ENCODE measurements at regions of chr1 and their contacts with region 1.

Region 1: DNA sequence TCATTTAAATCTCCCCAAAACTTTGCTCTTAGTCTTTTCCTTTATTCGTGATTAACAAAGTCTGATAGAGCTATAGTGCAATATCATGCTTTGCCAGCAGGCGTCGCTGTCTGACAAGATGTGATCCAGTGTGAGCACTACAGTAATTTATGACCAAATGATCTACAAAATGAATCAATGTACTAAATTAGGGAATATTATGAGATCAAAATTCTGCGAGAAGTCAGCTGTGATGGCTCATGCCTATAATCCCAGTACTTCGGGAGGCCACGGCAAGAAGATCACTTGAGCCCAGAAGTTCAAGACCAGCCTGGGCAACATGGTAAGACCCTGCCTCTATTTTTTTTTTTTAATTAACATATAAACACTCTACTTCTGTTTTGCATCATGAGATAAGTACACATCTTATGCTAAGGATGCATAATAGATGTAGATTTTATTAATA is 3.6 kb upstream of the SPSB1 start:
- DNase-seq: no peak
- CTCF ChIP-seq: peak; percentile 91

Region 2: DNA sequence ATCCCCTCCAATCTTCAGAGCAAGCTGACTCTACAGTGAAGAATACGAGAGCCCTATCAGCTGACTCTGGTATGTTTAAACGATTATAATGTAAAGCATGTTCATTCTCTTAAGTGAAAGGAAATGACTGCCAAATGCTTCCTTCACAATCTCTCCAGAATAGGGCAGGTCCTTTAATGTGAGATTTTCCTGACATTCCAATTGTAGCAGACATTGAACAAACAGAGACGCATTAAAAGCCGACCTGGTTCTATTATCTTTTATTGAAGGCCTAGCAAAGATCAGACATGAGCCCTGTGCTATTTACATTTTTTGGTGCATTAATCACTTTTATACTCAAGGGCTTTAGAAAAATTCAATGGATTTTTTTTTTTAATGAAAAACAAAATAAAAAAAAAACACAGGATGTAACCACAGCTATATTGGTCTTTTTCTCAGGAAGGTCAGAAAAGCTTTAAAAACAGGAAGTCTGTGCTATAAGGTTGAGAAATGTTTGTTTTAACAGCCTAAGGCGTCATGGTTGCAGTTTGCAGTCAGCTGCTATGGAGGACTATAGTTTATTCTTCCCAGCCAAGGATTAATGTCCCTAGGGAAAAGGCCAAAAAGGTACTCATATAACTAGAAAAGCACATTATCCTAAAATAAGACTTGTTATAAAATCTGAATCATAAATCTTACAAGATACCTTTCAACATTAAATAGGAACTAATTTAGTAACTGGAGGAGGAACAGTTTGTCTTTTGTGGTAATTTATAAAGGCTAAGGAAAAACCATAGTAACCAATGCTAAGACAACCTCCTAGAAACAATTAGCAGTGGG is 576.5 kb before region 1 on chr1:
- in situ Hi-C with region 1: no loop called
- DNase-seq: no peak
- CTCF ChIP-seq: no peak

Region 3: GRCh38 chr1:9455487-9456234 is 166.5 kb after region 1 on chr1:
- in situ Hi-C with region 1: loop called (anchors 10 kb)
- DNase-seq: peak; percentile 86
- CTCF ChIP-seq: peak; percentile 78

Region 4: GRCh38 chr1:9486466-9487140 is 197.5 kb after region 1 on chr1:
- in situ Hi-C with region 1: loop called (anchors 10 kb)
- DNase-seq: no peak
- CTCF ChIP-seq: no peak

Region 5: GRCh38 chr1:9558271-9558945 is 269.3 kb after region 1 on chr1:
- in situ Hi-C with region 1: no loop called
- DNase-seq: no peak
- CTCF ChIP-seq: no peak

Measured in GM13976 (cell line).